ENCODE measurements at regions of chr12 and their contacts with region 1.

Region 1: DNA sequence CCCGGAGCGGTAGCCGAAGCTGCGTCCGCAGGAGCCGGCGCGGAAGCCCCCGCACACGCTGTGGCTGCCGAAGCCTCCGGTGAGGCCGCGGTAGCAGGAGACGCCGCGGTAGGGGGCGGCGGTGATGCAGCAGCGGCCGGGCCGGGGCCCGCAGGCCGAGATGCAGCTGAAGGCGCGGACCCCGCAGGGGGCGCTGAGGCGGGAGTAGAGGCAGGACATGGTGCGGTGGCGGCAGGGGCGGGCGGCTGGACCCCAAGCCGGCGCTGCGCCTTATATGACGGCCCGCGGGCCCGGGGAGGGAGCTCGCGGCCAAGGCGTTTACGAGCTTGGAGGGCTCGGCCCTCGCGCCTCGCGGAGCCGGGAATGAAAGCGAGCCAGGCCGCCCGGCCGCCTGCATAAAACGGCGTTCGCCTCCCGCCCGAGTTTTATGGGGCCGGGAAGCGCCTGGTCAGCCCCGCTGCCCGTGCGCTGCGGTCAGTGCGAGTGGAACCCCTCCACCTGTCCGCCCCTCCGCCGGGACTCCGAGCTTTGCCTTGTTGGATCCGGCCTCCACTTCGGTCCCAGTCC is 16.0 kb upstream of the KRT86 start:
- DNase-seq: no peak
- H3K4me3 ChIP-seq: peak overlapping the region in 28 of 59 donors; percentile 7 to 47 (median 26)
- H3K27ac ChIP-seq: no peak overlapping the region
- H3K27me3 ChIP-seq: peaks cover 0 to 39% (median 15%) of the 10 kb centered on the region in 45 donors
- CTCF ChIP-seq: peak in 1 of 56 donors; percentile 8

Region 2: DNA sequence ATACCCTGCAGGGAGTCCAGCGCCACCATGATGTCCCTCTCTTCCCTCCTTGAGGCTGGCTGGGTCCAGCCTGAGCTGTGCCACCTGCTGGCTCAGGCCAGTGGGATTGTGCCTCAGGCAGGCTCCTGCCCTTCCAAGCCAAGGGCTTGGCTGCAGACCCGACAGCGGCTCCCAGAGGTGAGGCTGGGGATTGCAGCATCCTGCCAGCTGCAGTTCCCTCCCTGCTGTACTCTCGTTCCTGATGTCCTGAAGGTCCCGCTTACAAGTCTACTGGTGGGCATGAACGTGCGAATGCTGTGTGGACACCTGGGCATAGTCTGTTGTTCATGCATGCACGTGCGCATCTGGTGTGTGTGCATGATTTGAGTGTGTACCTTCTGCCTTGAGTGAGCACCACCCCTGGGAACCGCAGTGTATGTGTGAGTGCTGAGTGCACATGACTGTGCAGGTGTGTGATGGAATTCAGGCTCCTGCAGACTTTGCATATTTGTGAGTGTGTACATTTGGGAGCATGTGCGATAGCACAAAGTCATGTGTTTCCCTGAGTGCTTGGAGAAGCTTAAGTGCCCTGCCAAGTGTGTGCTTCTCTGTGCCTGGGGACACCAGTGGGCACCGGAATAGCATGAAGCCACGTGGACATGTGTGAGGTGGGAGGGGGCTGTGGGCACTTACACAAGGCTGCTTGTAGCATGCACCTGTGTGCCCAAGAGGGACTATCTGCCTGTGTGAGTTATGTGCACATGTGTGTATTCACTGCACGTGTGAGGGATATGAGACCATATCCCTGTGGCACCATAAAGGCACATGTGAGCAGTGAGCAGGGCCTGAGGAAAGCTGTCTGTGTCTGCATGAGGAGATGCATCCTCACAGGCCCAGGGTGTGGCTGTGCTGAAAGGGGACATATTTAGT is 44.7 kb before region 1 on chr12:
- intact Hi-C with region 1: loop called in 1 of 2 experiments (anchors 5 kb)
- DNase-seq: peak; percentile 35 to 82 (median 60)
- H3K4me3 ChIP-seq: no peak overlapping the region
- H3K27ac ChIP-seq: no peak overlapping the region
- H3K27me3 ChIP-seq: peaks cover 0 to 5% (median 0%) of the 10 kb centered on the region in 45 donors
- CTCF ChIP-seq: peak; percentile 38 to 98 (median 89)

Region 3: DNA sequence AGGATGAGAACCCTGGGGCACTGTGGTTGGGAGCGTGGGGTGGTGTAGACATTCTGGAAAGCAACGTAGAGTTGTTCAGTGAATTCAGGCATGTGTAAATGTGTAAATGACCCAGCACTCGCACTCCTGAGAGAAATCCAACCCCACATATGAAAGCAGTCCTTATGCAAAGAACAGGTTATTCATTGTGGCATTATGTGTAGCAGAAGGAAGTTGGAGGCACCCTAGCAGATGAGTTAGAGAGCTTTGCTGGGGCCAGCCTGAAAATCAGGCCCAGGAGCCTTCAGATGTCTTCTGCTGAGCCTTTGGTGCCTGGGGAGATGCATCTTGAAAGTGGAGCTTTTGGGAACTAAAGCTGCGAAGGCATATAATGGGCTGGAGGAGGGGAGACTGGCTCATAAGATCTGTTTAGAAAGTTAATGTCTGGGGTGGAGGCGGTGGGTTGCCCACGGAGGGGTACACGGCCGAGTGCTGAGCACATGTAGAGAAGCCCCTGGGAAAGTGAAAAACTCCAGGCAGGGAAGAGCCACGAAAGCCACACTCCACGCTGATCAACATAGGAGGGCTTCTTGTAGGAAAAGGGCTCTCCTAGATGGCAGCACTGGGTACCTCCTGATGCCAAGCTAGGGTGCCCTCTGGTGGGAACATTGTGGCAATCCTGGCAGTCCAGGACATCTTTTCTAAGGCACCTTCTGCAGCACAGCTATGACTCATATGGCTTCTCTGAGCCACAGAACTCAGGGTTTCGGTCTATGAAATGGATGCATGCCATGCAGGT is 68.8 kb after region 1 on chr12:
- intact Hi-C with region 1: loop called in 1 of 2 experiments (anchors 5 kb)
- DNase-seq: peak; percentile 53 to 86 (median 78)
- H3K4me3 ChIP-seq: no peak overlapping the region
- H3K27ac ChIP-seq: no peak overlapping the region
- H3K27me3 ChIP-seq: peaks cover 0 to 8% (median 0%) of the 10 kb centered on the region in 45 donors
- CTCF ChIP-seq: peak; percentile 36 to 97 (median 90)

Region 4: GRCh38 chr12:52650520-52651081 is 392.2 kb after region 1 on chr12:
- intact Hi-C with region 1: no loop called
- DNase-seq: no peak
- H3K4me3 ChIP-seq: no peak overlapping the region
- H3K27ac ChIP-seq: no peak overlapping the region
- H3K27me3 ChIP-seq: peaks cover 0 to 14% (median 0%) of the 10 kb centered on the region in 45 donors
- CTCF ChIP-seq: no peak

Measured in dorsolateral prefrontal cortex (tissue), 120 donors.